ENCODE measurements at regions of chr3 and their contacts with region 1.

Region 1: GRCh38 chr3:46976326-46977190 is at the start of gene CCDC12:
- DNase-seq: peak; percentile 98
- H3K4me3 ChIP-seq: peak within 1 kb of the TSS; percentile 61 to 66
- H3K27ac ChIP-seq: peak within 1 kb of the TSS; percentile 93
- H3K4me1 ChIP-seq: peaks cover 3% of the 10 kb centered on the region
- H3K27me3 ChIP-seq: no peaks in the 10 kb centered on the region
- CTCF ChIP-seq: peak in 2 of 4 experiments; percentile 16 to 26
- POLR2A ChIP-seq: peak; percentile 69
- total RNA-seq, gene CCDC12: 34.6 to 78.7 TPM

Region 2: GRCh38 chr3:46931631-46932331 is 44.8 kb before region 1 on chr3:
- intact Hi-C with region 1: loop called (anchors 5 kb)
- DNase-seq: no peak
- H3K4me3 ChIP-seq: no peak overlapping the region
- H3K27ac ChIP-seq: peak overlapping the region; percentile 27 to 30
- H3K4me1 ChIP-seq: peaks cover 8% of the 10 kb centered on the region
- H3K27me3 ChIP-seq: no peaks in the 10 kb centered on the region
- CTCF ChIP-seq: no peak
- POLR2A ChIP-seq: no peak

Region 3: DNA sequence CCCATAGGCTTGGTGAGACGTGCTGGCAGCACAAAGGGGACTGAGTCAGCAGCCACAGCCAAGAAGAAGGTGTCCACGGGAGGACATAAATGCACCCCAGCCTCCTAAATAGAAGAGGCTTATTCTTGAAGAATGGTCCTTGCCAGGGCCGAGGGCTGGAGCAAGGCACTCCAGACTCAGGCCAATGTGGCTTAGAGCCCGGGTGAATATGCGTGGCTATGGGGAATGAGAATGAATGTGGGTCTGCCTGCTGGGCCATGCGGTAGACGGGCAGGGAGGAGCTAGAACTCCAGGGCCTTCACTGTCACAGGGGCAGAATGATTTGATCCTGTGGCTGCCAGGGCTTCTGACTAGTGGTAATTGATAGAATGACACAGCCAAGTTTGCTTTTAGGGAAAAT is 860.4 kb after region 1 on chr3:
- intact Hi-C with region 1: no loop called
- DNase-seq: no peak
- H3K4me3 ChIP-seq: no peak overlapping the region
- H3K27ac ChIP-seq: no peak overlapping the region
- H3K4me1 ChIP-seq: no peaks in the 10 kb centered on the region
- H3K27me3 ChIP-seq: no peaks in the 10 kb centered on the region
- CTCF ChIP-seq: no peak
- POLR2A ChIP-seq: no peak